PC-9 (cell line): ENCODE measurements at regions of chr1 and their contacts with region 1.

Region 1: DNA sequence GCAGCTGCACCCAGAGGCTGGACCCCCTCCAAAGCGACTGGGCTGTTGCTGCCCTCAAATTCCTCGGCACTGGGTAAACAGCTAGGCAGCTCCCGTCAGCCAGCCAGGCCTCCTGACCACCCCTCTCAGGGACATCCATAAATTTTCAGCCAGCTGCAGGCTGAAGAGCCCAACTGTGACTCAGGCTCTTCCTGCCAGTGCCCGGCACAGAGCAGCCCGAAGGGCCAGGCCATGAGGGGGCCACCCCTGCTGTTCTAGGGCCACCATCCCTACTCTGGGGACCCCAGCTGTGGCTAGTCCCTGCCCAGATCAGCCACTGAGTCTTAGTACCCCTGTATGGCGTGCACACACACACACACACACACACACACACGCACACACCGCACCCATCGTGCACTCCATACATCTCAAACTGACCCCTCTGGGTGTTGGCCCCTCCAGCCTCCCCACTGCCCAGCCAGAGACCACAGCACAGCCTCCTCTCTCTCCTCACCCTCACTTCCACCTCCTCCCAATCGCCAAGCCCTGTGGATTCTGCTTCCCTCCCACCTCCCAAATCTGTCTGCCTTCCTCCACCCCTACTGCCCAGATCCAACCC is 6.2 kb upstream of the LAPTM5 start:
- DNase-seq: no peak
- H3K4me3 ChIP-seq: no peak overlapping the region
- H3K27ac ChIP-seq: no peak overlapping the region
- H3K4me1 ChIP-seq: peaks cover 12% of the 10 kb centered on the region
- H3K27me3 ChIP-seq: no peaks in the 10 kb centered on the region
- CTCF ChIP-seq: no peak

Region 2: GRCh38 chr1:30562559-30562958 is 201.2 kb before region 1 on chr1:
- CTCF ChIA-PET with region 1: no interaction called
- POLR2A ChIA-PET with region 1: no interaction called
- intact Hi-C with region 1: no loop called
- DNase-seq: no peak
- H3K4me3 ChIP-seq: no peak overlapping the region
- H3K27ac ChIP-seq: no peak overlapping the region
- H3K4me1 ChIP-seq: no peaks in the 10 kb centered on the region
- H3K27me3 ChIP-seq: no peaks in the 10 kb centered on the region
- CTCF ChIP-seq: no peak

Region 3: DNA sequence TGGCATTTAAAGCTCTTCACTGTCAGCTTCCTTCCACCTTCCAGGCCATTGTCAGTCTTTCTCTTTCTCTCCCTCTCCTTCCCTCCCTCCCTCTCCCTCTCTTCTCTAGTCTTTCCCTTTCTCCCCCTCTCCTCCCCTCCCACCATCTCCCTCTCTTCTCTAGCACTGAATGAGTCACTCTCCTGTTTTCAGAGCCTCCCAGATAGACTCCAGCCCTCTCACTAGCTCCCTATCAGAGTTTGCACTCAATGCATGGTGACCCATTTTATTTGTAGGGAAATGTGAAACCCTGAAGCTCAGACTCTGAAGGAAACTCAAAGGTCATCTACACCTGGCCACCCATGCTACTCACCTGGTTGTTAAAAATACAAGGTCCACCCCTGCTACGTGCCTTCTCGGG is 35.9 kb before region 1 on chr1:
- CTCF ChIA-PET with region 1: interaction called, 12 read pairs
- POLR2A ChIA-PET with region 1: interaction called, 10 read pairs
- intact Hi-C with region 1: no loop called
- DNase-seq: no peak
- H3K4me3 ChIP-seq: no peak overlapping the region
- H3K27ac ChIP-seq: no peak overlapping the region
- H3K4me1 ChIP-seq: 0 out of 2 replicates have a peak, but pooled peaks cover 6% of the 10 kb centered on the region
- H3K27me3 ChIP-seq: no peaks in the 10 kb centered on the region
- CTCF ChIP-seq: no peak

Region 4: GRCh38 chr1:30868833-30869435 is 105.2 kb after region 1 on chr1:
- CTCF ChIA-PET with region 1: interaction called, 12 read pairs
- POLR2A ChIA-PET with region 1: no interaction called
- intact Hi-C with region 1: no loop called
- DNase-seq: no peak
- H3K4me3 ChIP-seq: no peak overlapping the region
- H3K27ac ChIP-seq: no peak overlapping the region
- H3K4me1 ChIP-seq: no peaks in the 10 kb centered on the region
- H3K27me3 ChIP-seq: no peaks in the 10 kb centered on the region
- CTCF ChIP-seq: no peak

Region 5: GRCh38 chr1:31487143-31487542 is 723.4 kb after region 1 on chr1:
- CTCF ChIA-PET with region 1: no interaction called
- POLR2A ChIA-PET with region 1: no interaction called
- intact Hi-C with region 1: no loop called
- DNase-seq: no peak
- H3K4me3 ChIP-seq: no peak overlapping the region
- H3K27ac ChIP-seq: no peak overlapping the region
- H3K4me1 ChIP-seq: peaks cover 18% of the 10 kb centered on the region
- H3K27me3 ChIP-seq: no peaks in the 10 kb centered on the region
- CTCF ChIP-seq: no peak